Activated T-helper 1 cell treated with anti-CD3 and anti-CD28 coated beads, Interleukin-12 subunit alpha, Interleukin-12 subunit beta, Interleukin-2, Interleukin-4 antibody, amounts not matched to agents 30 ng/mL and 10 ng/mL and 1 ng/mL, durations not matched to agents 14 hours and 24 hours and 36 hours (primary cell): ENCODE measurements at regions of chr15 and their contacts with region 1.

Region 1: DNA sequence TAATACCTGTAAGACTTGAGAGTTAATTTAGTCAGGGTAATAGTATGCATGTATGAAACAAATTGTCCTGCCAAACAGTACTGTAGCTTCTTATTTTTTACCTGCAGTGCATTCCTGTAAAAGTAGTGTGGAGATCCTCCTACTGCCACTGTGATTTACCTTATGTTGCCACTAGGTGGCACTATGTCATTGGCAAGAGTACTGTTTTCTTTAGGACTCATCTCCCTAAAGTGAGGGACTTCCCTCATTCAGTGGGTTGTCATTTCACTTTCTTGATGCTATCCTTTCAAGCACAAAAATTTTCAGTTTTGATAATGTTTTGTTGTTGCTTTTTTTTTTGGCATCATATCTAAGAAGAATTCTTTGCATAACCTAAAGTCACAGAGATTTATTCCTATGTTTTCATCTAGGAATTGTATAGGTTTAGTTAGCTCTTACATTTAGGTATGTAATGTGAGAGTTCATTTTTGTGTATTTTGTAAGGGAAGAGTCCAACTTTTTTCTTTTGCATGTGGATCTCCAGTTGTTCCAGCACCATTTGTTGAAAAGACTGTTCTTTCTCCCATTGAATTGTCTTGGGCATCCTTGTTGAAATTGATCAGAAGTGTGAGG is 105.7 kb downstream of the AKAP13 start:
- DNase-seq: peak; percentile 54
- H3K4me3 Mint-ChIP-seq: no peak overlapping the region
- H3K27ac Mint-ChIP-seq: no peak overlapping the region
- H3K4me1 Mint-ChIP-seq: peaks cover 57% of the 10 kb centered on the region
- H3K27me3 Mint-ChIP-seq: no peaks in the 10 kb centered on the region

Region 2: DNA sequence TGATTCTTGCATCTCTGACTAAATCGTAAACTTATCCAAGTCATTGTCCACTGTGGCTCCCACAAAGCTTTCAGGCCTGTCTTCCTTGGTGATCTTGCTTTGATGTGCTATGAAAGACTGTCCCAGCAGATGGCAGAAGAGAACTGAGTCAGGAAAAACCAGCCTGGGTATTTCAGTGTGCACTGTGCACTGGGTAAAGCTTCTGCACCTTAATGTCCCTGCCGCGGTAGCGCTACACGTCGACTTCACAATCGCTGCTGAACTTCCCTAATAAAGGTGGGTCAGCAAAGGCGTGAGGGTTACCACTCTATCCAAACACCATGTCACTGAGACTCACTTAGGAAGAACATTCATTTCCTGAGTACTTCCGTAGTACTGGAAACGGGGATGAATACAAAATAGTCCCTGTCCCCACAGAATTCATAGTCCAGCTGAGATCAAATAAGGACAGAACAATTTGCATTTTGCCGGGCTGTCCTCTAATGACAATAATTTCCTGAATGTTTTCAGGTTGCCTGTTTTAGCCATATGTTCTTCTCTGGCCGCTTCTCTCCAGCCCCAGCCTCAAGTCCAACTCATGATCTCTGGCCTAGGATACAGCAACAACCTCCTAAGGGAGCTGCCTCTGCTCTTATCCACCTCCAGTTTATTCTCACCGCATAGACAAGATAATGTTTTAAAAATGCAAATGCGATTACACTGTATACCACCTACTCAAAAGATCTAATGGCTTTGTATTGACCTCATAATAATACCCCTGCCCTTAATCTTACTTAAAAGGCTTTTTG is 189.3 kb before region 1 on chr15:
- intact Hi-C with region 1: loop called (anchors 1 kb)
- DNase-seq: peak; percentile 68
- H3K4me3 Mint-ChIP-seq: peak overlapping the region; percentile 34
- H3K27ac Mint-ChIP-seq: no peak overlapping the region
- H3K4me1 Mint-ChIP-seq: peaks cover 18% of the 10 kb centered on the region
- H3K27me3 Mint-ChIP-seq: peaks cover 5% of the 10 kb centered on the region

Region 3: DNA sequence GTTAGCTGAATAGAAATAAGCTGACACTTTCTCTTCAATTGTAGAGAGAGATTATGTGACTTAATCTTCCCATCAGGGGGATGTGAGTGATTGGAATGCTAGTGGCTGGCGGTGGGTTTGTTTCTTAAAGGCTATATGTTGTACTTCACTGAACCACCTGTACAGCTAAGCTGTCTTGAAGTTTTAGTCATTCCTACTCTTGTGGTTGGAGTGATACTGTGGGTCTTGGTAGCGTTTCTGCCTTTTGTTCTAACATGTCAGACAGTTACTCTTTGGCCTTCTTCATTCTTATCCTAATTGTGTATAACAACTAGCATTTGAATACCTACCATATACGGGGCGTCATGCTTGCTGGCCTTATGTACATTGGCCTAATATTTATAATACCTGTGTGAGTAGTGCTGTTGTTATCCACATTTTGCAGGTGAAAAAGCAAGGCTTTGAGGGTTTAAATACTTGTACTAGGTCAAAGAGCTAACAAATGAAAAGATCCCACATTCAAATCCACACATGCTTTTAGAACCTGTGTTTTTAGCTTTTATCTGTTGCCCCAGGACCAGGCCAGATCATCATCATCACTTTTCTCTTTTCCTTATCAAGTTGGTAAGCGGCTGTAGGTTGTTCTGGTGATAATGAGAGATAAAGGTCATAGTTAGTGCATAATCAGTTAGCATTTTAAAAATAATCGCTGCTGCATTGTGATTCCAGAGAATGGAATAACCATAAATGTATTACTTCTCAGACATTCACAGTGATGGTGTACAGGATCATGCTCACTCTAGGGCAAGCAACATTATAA is 55.5 kb before region 1 on chr15:
- intact Hi-C with region 1: no loop called
- DNase-seq: no peak
- H3K4me3 Mint-ChIP-seq: no peak overlapping the region
- H3K27ac Mint-ChIP-seq: peak overlapping the region; percentile 34
- H3K4me1 Mint-ChIP-seq: peaks cover 26% of the 10 kb centered on the region
- H3K27me3 Mint-ChIP-seq: no peaks in the 10 kb centered on the region

Region 4: DNA sequence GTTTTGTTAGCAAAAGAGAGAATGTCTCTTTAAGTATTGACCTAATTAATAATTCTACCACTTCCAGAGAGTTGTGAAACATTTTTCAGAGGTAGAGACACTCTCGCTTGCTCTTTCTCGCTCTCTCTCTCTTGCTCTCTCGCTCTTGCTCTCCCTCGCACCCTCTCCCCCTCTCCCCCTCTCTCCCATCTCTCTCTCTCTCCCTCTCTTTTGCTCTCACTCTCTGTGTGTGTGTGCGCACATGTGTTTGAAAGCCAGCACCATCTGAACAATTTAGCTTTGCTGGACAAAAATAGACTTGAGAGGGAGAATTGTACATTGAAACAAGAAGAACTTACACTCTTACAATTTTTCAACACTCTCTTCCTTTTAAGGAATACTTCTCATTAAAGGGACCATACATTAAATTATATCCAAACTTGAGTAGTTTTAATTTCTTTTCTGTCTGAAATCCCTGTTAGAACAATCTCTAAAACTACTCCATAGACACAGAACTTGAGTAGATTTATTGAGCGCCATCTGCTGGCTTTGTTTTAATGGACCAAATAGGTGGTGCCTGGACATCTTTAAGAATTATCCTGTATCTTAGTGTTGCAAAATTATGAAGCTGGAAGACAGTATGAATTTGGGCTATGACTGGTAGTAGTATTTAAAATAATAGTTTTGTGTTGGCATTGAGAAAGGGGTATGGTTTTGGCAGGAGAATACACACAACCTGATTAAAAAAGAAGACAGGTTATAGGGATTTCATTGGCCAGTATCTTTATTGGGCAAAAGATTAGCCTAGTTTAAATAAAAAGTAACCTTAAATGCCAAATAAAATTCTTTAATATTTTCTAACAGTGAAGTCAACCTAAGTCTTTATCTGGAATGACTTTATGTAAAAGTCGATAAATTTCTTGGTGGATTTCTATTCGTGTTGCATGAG is 19.0 kb after region 1 on chr15:
- intact Hi-C with region 1: loop called (anchors 1 kb)
- DNase-seq: peak; percentile 5
- H3K4me3 Mint-ChIP-seq: no peak overlapping the region
- H3K27ac Mint-ChIP-seq: no peak overlapping the region
- H3K4me1 Mint-ChIP-seq: peaks cover 20% of the 10 kb centered on the region
- H3K27me3 Mint-ChIP-seq: no peaks in the 10 kb centered on the region

Region 5: GRCh38 chr15:85597155-85597815 is 111.2 kb after region 1 on chr15:
- intact Hi-C with region 1: loop called (anchors 1 kb)
- DNase-seq: peak; percentile 21
- H3K4me3 Mint-ChIP-seq: peak overlapping the region; percentile 53
- H3K27ac Mint-ChIP-seq: peak overlapping the region; percentile 41
- H3K4me1 Mint-ChIP-seq: peaks cover 52% of the 10 kb centered on the region
- H3K27me3 Mint-ChIP-seq: no peaks in the 10 kb centered on the region

Region 6: DNA sequence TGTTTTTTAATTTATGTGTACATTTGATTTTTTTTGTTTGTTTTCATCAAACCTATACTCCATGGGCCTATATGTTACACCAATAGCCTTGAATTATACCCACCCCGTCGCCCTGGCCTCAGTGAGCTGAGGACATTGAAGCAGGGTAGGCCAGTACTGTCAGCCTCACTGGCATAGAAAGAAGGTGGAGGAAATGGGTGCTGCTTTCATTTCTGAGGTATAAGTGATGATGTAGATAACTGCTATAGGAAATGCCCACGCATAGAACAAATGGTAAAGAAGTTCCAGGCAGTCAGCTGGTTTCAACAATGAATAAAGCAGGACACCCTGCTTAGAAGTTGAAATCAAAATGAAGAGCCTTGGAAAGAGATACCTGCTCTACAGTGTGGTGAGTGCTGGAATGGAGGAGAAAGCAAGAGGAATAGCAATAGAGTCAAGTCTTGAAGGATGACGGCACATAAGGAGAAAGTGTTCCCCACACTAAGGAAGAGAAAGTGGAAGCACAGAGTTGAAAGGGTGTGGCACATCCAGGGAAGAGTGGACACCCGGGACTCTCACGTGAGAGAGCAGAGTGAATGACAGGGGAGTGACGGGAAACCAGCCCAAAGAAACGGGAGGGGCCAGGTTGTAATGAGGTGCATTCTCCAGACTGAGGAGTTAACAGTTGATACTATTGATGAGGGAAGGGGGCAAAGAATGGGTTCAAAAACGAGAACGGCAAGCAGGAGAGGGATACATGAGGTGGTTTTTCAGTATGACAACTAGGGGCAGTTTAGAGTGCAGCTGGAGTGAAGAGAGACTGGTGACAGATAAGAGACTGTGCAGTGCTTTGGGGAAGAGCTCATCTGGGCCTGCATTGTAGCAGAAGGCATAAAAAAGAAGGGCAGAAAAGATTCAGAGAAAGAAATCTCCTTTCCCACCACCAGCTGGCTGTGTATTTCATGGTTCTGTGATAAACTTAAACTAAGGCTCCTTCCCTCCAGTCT is 238.2 kb after region 1 on chr15:
- intact Hi-C with region 1: loop called (anchors 2 kb)
- DNase-seq: no peak
- H3K4me3 Mint-ChIP-seq: peak overlapping the region; percentile 72
- H3K27ac Mint-ChIP-seq: peak overlapping the region; percentile 90
- H3K4me1 Mint-ChIP-seq: peaks cover 47% of the 10 kb centered on the region
- H3K27me3 Mint-ChIP-seq: no peaks in the 10 kb centered on the region

Region 7: GRCh38 chr15:85794603-85795336 is 308.7 kb after region 1 on chr15 and contains the start of gene KLHL25:
- intact Hi-C with region 1: loop called (anchors 10 kb)
- DNase-seq: peak; percentile 92
- H3K4me3 Mint-ChIP-seq: peak within 1 kb of the TSS; percentile 91
- H3K27ac Mint-ChIP-seq: peak within 1 kb of the TSS; percentile 83
- H3K4me1 Mint-ChIP-seq: peaks cover 31% of the 10 kb centered on the region
- H3K27me3 Mint-ChIP-seq: peaks cover 4% of the 10 kb centered on the region
- total RNA-seq, gene KLHL25: 10.7 and 11.0 TPM in 2 replicates